PC-9 (cell line): ENCODE measurements at regions of chrX and their contacts with region 1.

Region 1: GRCh38 chrX:10722851-10723250 is 102.5 kb upstream of the MID1 start:
- DNase-seq: peak in 1 of 2 experiments; percentile 37
- H3K4me3 ChIP-seq: no peak overlapping the region
- H3K27ac ChIP-seq: no peak overlapping the region
- H3K4me1 ChIP-seq: no peaks in the 10 kb centered on the region
- H3K27me3 ChIP-seq: no peaks in the 10 kb centered on the region
- CTCF ChIP-seq: peak; percentile 82

Region 2: DNA sequence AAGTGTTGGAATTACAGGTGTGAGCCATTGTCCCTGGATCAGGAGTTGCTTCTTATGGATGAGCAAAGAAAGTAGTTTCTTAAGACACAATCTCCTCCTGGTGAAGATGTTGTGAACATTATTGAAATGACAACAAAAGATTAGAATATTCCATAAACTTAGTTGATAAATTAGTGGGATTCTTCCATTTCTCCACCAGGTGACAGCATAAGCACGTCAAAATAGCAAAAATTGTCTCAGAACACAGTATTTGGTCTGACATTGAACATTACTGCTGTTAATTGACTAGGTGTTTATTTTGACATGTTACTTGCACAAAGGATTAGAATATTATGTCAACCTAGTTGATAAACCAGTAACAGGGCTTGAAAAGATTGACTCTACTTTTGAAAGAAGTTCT is 734.1 kb before region 1 on chrX:
- CTCF ChIA-PET with region 1: no interaction called
- POLR2A ChIA-PET with region 1: no interaction called
- intact Hi-C with region 1: loop called (anchors 5 kb)
- DNase-seq: no peak
- H3K4me3 ChIP-seq: no peak overlapping the region
- H3K27ac ChIP-seq: no peak overlapping the region
- H3K4me1 ChIP-seq: no peaks in the 10 kb centered on the region
- H3K27me3 ChIP-seq: no peaks in the 10 kb centered on the region
- CTCF ChIP-seq: peak; percentile 70

Region 3: DNA sequence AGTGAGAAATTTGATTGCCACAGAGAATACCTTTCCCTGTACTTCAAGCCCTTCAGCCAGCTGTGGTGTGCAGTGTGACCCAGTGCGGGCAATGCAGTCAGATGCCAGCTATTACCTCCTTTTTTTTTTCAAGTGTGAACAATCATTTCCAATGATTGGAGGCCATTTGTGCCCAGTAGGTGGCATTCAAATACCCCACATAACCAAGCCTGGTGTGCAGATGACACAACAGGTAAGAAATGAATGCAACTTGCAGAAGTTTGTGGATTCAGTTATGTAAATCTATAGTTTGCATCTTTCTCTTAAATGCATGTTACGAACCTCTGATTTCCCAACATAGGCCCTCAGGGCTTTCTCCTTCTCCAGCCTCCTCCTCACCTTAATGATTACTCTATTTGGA is 468.1 kb before region 1 on chrX:
- CTCF ChIA-PET with region 1: no interaction called
- POLR2A ChIA-PET with region 1: no interaction called
- intact Hi-C with region 1: loop called (anchors 2 kb)
- DNase-seq: peak; percentile 20 to 57
- H3K4me3 ChIP-seq: no peak overlapping the region
- H3K27ac ChIP-seq: no peak overlapping the region
- H3K4me1 ChIP-seq: no peaks in the 10 kb centered on the region
- H3K27me3 ChIP-seq: no peaks in the 10 kb centered on the region
- CTCF ChIP-seq: peak; percentile 56

Region 4: GRCh38 chrX:10677490-10677889 is 45.4 kb before region 1 on chrX:
- CTCF ChIA-PET with region 1: no interaction called
- POLR2A ChIA-PET with region 1: no interaction called
- intact Hi-C with region 1: no loop called
- DNase-seq: no peak
- H3K4me3 ChIP-seq: no peak overlapping the region
- H3K27ac ChIP-seq: no peak overlapping the region
- H3K4me1 ChIP-seq: no peaks in the 10 kb centered on the region
- H3K27me3 ChIP-seq: no peaks in the 10 kb centered on the region
- CTCF ChIP-seq: no peak

Region 5: GRCh38 chrX:10769195-10769594 is 46.3 kb after region 1 on chrX:
- CTCF ChIA-PET with region 1: no interaction called
- POLR2A ChIA-PET with region 1: no interaction called
- intact Hi-C with region 1: loop called (anchors 2 kb)
- DNase-seq: no peak
- H3K4me3 ChIP-seq: no peak overlapping the region
- H3K27ac ChIP-seq: no peak overlapping the region
- H3K4me1 ChIP-seq: no peaks in the 10 kb centered on the region
- H3K27me3 ChIP-seq: no peaks in the 10 kb centered on the region
- CTCF ChIP-seq: peak; percentile 60

Region 6: DNA sequence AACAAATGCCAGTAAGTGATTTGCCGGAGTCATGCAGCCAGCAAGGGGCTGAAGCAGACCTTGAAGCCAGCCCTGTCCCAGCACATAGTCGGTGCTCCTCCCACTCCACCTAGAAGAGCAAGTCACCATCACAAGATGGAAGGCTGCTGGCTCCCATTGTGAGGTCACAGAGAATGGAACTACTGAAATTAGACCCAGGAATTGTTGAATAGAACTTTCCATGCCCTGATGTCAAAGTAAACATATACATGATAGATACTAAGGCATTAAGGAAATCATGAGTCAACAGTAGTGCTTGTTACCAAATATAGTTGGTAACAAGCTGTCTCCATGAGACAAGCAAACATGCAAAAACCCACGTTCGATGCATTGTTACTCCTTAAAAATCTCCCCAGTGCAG is 74.6 kb after region 1 on chrX:
- CTCF ChIA-PET with region 1: no interaction called
- POLR2A ChIA-PET with region 1: no interaction called
- intact Hi-C with region 1: no loop called
- DNase-seq: no peak
- H3K4me3 ChIP-seq: no peak overlapping the region
- H3K27ac ChIP-seq: no peak overlapping the region
- H3K4me1 ChIP-seq: no peaks in the 10 kb centered on the region
- H3K27me3 ChIP-seq: no peaks in the 10 kb centered on the region
- CTCF ChIP-seq: no peak

Region 7: GRCh38 chrX:10922158-10922557 is 199.3 kb after region 1 on chrX:
- CTCF ChIA-PET with region 1: no interaction called
- POLR2A ChIA-PET with region 1: no interaction called
- intact Hi-C with region 1: no loop called
- DNase-seq: peak; percentile 2 to 77
- H3K4me3 ChIP-seq: no peak overlapping the region
- H3K27ac ChIP-seq: no peak overlapping the region
- H3K4me1 ChIP-seq: peaks cover 4% of the 10 kb centered on the region
- H3K27me3 ChIP-seq: no peaks in the 10 kb centered on the region
- CTCF ChIP-seq: no peak

Region 8: GRCh38 chrX:11100281-11101035 is 377.6 kb after region 1 on chrX:
- CTCF ChIA-PET with region 1: no interaction called
- POLR2A ChIA-PET with region 1: no interaction called
- intact Hi-C with region 1: loop called (anchors 1 kb)
- DNase-seq: peak in 1 of 2 experiments; percentile 24
- H3K4me3 ChIP-seq: no peak overlapping the region
- H3K27ac ChIP-seq: no peak overlapping the region
- H3K4me1 ChIP-seq: no peaks in the 10 kb centered on the region
- H3K27me3 ChIP-seq: no peaks in the 10 kb centered on the region
- CTCF ChIP-seq: peak; percentile 70